A549 (cell line): ENCODE measurements at regions of chr18 and their contacts with region 1.

Region 1: DNA sequence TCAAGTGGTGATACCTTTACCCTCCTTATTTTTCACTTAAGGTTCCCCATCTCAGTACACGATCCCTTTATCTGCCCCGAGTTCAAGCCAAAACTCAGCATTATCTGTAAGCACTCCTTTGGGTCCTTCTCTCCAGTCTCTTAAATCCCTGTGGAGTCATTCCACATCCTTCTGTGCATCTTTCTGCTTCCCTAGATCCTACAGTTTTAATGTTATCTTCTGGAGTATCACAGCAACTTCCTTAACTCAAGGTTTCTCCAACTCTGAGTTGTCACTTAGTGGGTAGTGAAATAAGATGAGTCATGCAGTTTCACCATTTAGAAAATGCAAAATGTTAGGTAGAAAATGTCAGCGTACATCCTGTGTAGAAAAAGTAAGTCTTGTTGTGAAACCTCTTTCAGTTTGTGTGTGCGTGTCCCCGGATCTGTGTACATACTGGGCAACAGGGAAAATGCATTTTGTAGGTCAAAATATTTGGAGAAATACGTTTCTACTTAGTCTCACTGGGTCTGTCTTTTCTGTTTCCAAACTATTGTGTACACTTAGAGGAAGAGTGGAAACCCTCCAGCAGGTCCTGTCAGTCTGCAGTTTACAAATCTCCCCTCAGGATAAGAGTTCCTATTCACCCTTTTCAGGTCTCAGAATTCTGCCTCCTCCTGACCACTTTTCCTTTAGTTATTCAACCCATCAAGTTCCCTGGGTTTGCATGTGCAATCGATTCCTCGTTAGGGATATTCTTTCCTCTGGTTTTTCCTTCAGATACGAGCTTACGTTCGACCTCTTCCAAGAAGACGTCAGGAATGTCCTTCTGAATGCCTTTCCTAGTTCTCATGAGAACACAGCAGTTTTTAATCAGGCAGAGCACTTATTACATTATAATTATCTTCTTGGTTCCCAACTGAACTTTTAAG is 154.8 kb downstream of the TGIF1 start:
- DNase-seq: peak in 1 of 2 experiments; percentile 94
- ATAC-seq: peak; percentile 48 to 60
- H3K4me3 ChIP-seq: peak overlapping the region; percentile 46
- H3K27ac ChIP-seq: peak overlapping the region; percentile 99 to 100
- H3K4me1 ChIP-seq: peaks cover 58% of the 10 kb centered on the region
- CTCF ChIP-seq: no peak
- EP300 ChIP-seq: peak; percentile 87 to 95; a peak in 4 of 5 replicates
- POLR2A ChIP-seq: no peak
- RAD21 ChIP-seq: no peak; a peak in 1 of 5 replicates

Region 2: GRCh38 chr18:3447895-3448837 is 156.6 kb before region 1 on chr18:
- CTCF ChIA-PET with region 1: interaction called, 21 read pairs
- POLR2A ChIA-PET with region 1: interaction called, 48 read pairs
- DNase-seq: peak; percentile 56 to 95
- ATAC-seq: peak; percentile 76 to 80
- H3K4me3 ChIP-seq: peak overlapping the region; percentile 93
- H3K27ac ChIP-seq: peak overlapping the region; percentile 98 to 100
- H3K4me1 ChIP-seq: peaks cover 25% of the 10 kb centered on the region
- CTCF ChIP-seq: peak; percentile 19; the same call in 1 of the 3 replicates
- EP300 ChIP-seq: peak in 1 of 2 experiments; percentile 27; a peak in 1 of 5 replicates
- POLR2A ChIP-seq: peak; percentile 57
- RAD21 ChIP-seq: peak in 1 of 2 experiments; percentile 31; a peak in 2 of 5 replicates

Region 3: GRCh38 chr18:3623769-3624545 is 19.2 kb after region 1 on chr18:
- CTCF ChIA-PET with region 1: interaction called, 10 read pairs
- POLR2A ChIA-PET with region 1: interaction called, 101 read pairs
- DNase-seq: peak; percentile 69 to 99
- ATAC-seq: peak; percentile 86 to 87
- H3K4me3 ChIP-seq: peak overlapping the region; percentile 32; the same call in 2 of the 3 replicates
- H3K27ac ChIP-seq: peak overlapping the region; percentile 99 to 100
- H3K4me1 ChIP-seq: peaks cover 60% of the 10 kb centered on the region
- CTCF ChIP-seq: no peak
- EP300 ChIP-seq: peak; percentile 95 to 99
- POLR2A ChIP-seq: peak; percentile 42; the same call in 1 of the 2 replicates
- RAD21 ChIP-seq: peak; percentile 20 to 38; a peak in 4 of 5 replicates

Region 4: GRCh38 chr18:3652380-3653262 is 47.9 kb after region 1 on chr18:
- CTCF ChIA-PET with region 1: interaction called, 3 read pairs
- POLR2A ChIA-PET with region 1: interaction called, 35 read pairs
- DNase-seq: peak; percentile 89 to 99
- ATAC-seq: peak; percentile 86 to 88
- H3K4me3 ChIP-seq: peak overlapping the region; percentile 51
- H3K27ac ChIP-seq: peak overlapping the region; percentile 99 to 100
- H3K4me1 ChIP-seq: peaks cover 63% of the 10 kb centered on the region
- CTCF ChIP-seq: no peak
- EP300 ChIP-seq: peak; percentile 60 to 88; a peak in 3 of 5 replicates
- POLR2A ChIP-seq: peak; percentile 29; the same call in 1 of the 2 replicates
- RAD21 ChIP-seq: peak in 1 of 2 experiments; percentile 5; a peak in 1 of 5 replicates